Activated naive CD4-positive, alpha-beta T cell treated with anti-CD3 and anti-CD28 coated beads for 36 hours (primary cell): ENCODE measurements at regions of chr4 and their contacts with region 1.

Region 1: DNA sequence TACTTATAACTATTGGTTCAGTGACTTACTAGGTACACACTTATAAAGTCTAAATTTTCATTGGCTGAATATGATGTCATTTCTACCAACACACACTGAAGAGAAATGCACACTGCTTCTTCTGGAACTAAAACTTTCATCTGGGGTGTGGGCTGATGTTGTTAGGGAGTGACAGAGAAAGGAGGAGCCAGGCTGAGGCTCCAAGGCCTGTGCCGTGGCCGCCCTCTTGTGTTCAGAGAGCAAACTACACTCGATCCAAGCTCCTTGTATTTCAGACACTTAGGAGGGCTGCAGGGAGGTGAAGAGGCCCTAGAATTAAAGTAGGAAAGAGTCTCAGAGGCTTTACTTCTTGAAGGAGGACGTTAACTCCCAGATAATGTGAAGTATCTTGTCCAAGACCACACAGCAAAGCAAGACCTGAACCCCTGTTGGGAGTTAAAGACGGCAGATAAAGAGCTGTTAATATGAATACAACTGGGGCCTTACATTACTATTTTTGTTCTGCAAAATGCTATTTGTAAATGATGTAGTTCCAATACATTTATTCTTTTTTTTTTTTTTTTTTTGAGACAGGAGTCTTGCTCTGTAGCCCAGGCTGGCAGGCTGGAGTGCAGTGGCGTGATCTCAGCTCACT is 137.5 kb downstream of the AFAP1 start:
- DNase-seq: peak; percentile 92
- H3K4me3 Mint-ChIP-seq: no peak overlapping the region
- H3K27ac Mint-ChIP-seq: peak overlapping the region; percentile 65
- H3K4me1 Mint-ChIP-seq: peaks cover 18% of the 10 kb centered on the region
- H3K27me3 Mint-ChIP-seq: no peaks in the 10 kb centered on the region

Region 2: GRCh38 chr4:7719354-7720174 is 82.6 kb before region 1 on chr4:
- CTCF ChIA-PET with region 1: interaction called, 16 read pairs
- intact Hi-C with region 1: loop called (anchors 1 kb)
- DNase-seq: peak; percentile 77
- H3K4me3 Mint-ChIP-seq: no peak overlapping the region
- H3K27ac Mint-ChIP-seq: no peak overlapping the region
- H3K4me1 Mint-ChIP-seq: peaks cover 4% of the 10 kb centered on the region
- H3K27me3 Mint-ChIP-seq: no peaks in the 10 kb centered on the region

Region 3: DNA sequence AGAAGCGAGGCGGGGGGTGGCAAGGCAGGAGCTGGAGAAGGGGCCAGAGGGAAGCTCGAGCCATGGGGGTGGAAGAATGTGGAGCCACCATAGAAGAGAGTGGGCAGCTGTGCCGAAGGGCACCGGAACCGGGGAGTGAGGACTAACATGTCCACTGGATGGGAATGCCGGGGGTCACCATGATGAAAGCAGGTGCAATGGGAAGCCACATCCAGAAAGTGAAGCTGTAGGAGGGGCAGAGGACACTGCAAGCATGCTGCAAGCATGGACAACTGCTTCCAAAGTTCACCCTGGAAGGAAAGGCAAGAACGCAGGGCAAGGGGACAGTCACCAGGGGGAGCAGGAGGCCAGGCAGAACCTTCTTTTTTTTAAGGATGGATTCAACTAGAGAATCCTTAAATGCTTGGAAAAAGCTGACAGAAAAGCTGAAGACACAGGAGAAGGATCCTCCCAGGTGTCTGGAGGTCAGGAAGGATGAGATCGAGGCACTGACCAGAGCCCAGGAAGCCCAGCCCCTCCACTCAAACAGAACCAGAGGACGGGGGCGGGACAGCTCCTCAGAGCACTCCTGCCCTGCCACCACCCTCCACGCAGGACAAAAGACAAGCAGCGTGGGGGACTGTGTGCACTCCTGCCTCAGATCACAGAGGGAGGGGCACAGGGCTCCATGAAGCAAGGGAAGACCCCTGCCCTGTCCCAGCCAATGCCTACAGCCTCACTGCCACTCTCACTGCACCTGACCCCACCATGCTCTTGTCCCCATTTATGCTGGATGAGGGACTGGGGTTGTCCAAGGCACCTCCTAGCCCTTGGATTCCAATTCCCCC is 31.8 kb before region 1 on chr4:
- CTCF ChIA-PET with region 1: interaction called, 16 read pairs
- intact Hi-C with region 1: loop called (anchors 1 kb)
- DNase-seq: peak; percentile 45
- H3K4me3 Mint-ChIP-seq: no peak overlapping the region
- H3K27ac Mint-ChIP-seq: peak overlapping the region; percentile 68
- H3K4me1 Mint-ChIP-seq: peaks cover 30% of the 10 kb centered on the region
- H3K27me3 Mint-ChIP-seq: no peaks in the 10 kb centered on the region

Region 4: GRCh38 chr4:7843831-7844593 is 41.8 kb after region 1 on chr4:
- CTCF ChIA-PET with region 1: interaction called, 23 read pairs
- intact Hi-C with region 1: loop called (anchors 1 kb)
- DNase-seq: peak; percentile 77
- H3K4me3 Mint-ChIP-seq: no peak overlapping the region
- H3K27ac Mint-ChIP-seq: peak overlapping the region; percentile 20
- H3K4me1 Mint-ChIP-seq: peaks cover 26% of the 10 kb centered on the region
- H3K27me3 Mint-ChIP-seq: no peaks in the 10 kb centered on the region

Region 5: GRCh38 chr4:7929118-7929951 is 127.1 kb after region 1 on chr4:
- CTCF ChIA-PET with region 1: interaction called, 8 read pairs
- intact Hi-C with region 1: loop called (anchors 1 kb)
- DNase-seq: no peak
- H3K4me3 Mint-ChIP-seq: no peak overlapping the region
- H3K27ac Mint-ChIP-seq: no peak overlapping the region
- H3K4me1 Mint-ChIP-seq: peaks cover 33% of the 10 kb centered on the region
- H3K27me3 Mint-ChIP-seq: no peaks in the 10 kb centered on the region

Region 6: GRCh38 chr4:7960790-7961655 is 158.8 kb after region 1 on chr4:
- CTCF ChIA-PET with region 1: interaction called, 4 read pairs
- intact Hi-C with region 1: loop called (anchors 1 kb)
- DNase-seq: peak; percentile 87
- H3K4me3 Mint-ChIP-seq: peak overlapping the region; percentile 2
- H3K27ac Mint-ChIP-seq: peak overlapping the region; percentile 68
- H3K4me1 Mint-ChIP-seq: peaks cover 48% of the 10 kb centered on the region
- H3K27me3 Mint-ChIP-seq: no peaks in the 10 kb centered on the region

Region 7: GRCh38 chr4:7987148-7987989 is 185.2 kb after region 1 on chr4:
- CTCF ChIA-PET with region 1: interaction called, 180 read pairs
- intact Hi-C with region 1: loop called (anchors 1 kb)
- DNase-seq: peak; percentile 90
- H3K4me3 Mint-ChIP-seq: no peak overlapping the region
- H3K27ac Mint-ChIP-seq: no peak overlapping the region
- H3K4me1 Mint-ChIP-seq: peaks cover 7% of the 10 kb centered on the region
- H3K27me3 Mint-ChIP-seq: peaks cover 5% of the 10 kb centered on the region

Region 8: GRCh38 chr4:8205749-8206611 is 403.8 kb after region 1 on chr4:
- CTCF ChIA-PET with region 1: no interaction called
- intact Hi-C with region 1: no loop called
- DNase-seq: no peak
- H3K4me3 Mint-ChIP-seq: no peak overlapping the region
- H3K27ac Mint-ChIP-seq: no peak overlapping the region
- H3K4me1 Mint-ChIP-seq: peaks cover 22% of the 10 kb centered on the region
- H3K27me3 Mint-ChIP-seq: no peaks in the 10 kb centered on the region